ENCODE measurements at regions of chr19 and their contacts with region 1.

Region 1: DNA sequence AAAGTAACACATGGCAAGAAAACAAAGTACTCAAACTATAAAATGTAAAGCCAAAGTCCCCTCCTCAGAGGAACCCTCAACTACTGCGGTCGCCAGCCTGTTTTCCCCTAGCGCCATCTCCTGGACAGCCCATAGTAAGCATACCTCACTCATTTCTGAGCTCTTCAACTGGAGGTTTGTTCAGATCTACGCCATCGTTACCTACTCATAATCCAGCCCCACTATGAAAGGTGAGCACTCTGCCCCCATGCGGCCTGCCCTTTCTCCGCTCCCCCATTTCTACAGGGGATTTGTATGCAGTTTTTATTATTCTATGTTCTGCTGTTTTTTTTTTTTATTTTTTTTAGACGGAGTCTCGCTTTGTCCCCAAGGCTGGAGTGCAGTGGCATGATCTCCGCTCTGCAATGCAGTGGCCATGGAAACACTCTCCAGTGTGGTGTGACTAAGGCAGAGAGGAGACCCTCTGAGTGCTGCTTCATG is 26.2 kb downstream of the OPA3 start:
- DNase-seq: peak; percentile 81

Region 2: DNA sequence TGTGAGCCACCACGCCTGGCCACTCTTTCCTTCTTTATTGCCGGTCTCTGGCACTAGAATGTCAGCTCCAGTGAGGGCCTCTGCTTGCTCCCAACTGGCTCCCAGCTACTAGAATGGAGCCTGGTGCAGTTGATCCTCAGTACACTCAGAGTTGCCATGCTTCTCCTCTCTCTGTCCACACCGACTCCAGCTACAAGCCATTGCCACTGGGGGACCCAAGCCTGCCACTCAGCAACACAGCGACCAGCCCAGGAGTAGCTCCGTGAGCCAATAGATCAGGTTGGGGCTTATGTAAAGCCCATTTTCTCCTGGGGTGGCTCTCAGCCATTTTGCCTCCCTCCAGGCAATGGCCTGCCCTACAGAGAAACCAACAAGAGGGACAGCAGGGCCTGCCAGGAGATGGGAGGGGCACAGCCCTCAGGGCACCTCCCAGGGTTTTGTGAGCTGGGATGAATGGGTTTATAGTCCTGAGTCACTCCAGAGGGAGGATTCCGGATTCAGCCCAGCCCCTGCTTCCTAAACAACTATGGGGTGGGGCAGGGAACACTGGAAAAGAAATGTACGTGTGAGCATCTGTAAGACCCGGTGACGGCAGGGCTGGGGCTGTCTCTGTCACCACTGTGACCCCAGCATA is 10.3 kb before region 1 on chr19:
- CTCF ChIA-PET with region 1: interaction called, 15 read pairs
- POLR2A ChIA-PET with region 1: interaction called, 3 read pairs
- DNase-seq: peak; percentile 22

Measured in HEK293T (cell line).